Heart right ventricle (tissue), 16 donors: ENCODE measurements at regions of chr6 and their contacts with region 1.

Region 1: GRCh38 chr6:41066867-41067304 is 5.3 kb downstream of the OARD1 start:
- DNase-seq: peak; percentile 43 to 69
- ATAC-seq: no peak
- H3K4me3 ChIP-seq: no peak overlapping the region
- H3K27ac ChIP-seq: peak overlapping the region in 1 of 10 donors; percentile 21
- H3K4me1 ChIP-seq: peaks cover 0 to 53% (median 33%) of the 10 kb centered on the region in 9 donors
- H3K27me3 ChIP-seq: no peaks in the 10 kb centered on the region
- CTCF ChIP-seq: peak; percentile 80 to 90 (median 87)

Region 2: DNA sequence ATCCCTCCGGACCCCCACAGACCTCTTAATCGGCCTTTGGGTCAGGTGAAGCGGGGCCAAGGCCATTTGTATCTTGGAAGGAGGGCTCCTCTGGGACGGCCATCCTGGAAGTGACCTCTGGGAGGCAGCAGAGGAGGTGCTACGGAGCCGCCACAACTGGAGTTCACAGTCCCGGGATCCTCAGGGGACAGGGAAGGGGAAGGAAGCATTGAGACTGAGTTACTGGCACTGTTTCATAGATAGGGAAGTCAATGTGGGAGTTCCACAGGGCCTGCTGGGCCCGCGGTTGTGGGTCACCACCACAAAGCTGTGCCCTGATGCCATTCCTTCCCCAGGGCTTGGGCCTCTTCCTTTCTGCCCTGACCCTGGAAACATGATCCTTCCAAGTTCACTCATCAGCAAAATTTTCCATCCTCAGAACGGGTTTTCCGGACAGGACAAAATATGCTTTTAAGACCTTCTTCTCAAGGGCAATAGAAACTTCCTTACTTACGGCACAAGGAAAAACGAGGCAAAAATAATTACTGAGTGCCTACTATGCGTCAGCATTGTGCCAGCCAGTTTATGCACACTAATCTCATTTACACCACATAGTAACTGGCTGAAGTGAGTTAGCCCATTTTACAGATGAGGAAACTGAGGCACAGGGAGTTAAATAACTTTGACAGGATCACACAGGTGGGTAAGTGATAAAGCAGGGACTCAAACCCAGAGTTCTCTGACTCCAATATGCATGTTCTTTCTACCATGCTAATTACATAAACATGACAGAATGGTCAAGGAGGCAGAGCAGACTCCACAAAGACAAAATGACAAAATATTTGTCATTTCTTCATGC is 171.7 kb before region 1 on chr6:
- intact Hi-C with region 1: loop called in 2 of 10 experiments (anchors 5 kb)
- DNase-seq: peak; percentile 56 to 67
- ATAC-seq: peak; percentile 53 to 88 (median 83)
- H3K4me3 ChIP-seq: no peak overlapping the region
- H3K27ac ChIP-seq: peak overlapping the region in 6 of 10 donors; percentile 8 to 92 (median 44)
- H3K4me1 ChIP-seq: peaks cover 0 to 36% (median 18%) of the 10 kb centered on the region in 9 donors
- H3K27me3 ChIP-seq: no peaks in the 10 kb centered on the region
- CTCF ChIP-seq: peak; percentile 24 to 70 (median 58)

Region 3: GRCh38 chr6:40999569-40999968 is 67.3 kb before region 1 on chr6:
- intact Hi-C with region 1: loop called in 2 of 10 experiments (anchors 10 kb)
- DNase-seq: peak; percentile 43 to 64
- ATAC-seq: peak; percentile 60 to 91 (median 73)
- H3K4me3 ChIP-seq: no peak overlapping the region
- H3K27ac ChIP-seq: peak overlapping the region in 2 of 10 donors; percentile 74 to 82
- H3K4me1 ChIP-seq: peaks cover 0 to 38% (median 14%) of the 10 kb centered on the region in 9 donors
- H3K27me3 ChIP-seq: peaks cover 0 to 13% (median 0%) of the 10 kb centered on the region in 7 donors
- CTCF ChIP-seq: peak in 7 of 9 donors; percentile 38 to 59 (median 53)

Region 4: DNA sequence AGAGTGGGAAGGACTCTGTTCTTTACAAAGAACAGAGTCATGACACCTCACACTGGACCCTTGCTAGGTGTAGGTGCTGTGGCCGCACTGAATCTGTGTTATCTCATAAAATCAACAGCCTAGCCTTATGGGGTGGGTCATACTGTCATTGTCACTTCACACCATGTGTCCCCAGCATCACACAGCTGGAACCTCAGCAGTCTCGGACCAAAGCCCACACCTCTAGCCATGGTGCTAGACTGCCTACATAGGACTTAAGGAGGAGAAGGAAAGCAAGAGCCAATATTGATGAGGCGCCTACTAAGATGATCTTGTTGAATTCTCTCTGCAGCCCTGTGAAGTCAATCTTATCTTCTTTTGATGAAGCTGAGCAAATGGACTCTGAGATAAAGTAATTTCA is 58.9 kb before region 1 on chr6:
- intact Hi-C with region 1: loop called in 7 of 10 experiments (anchors 5 to 10 kb)
- DNase-seq: no peak
- ATAC-seq: no peak
- H3K4me3 ChIP-seq: no peak overlapping the region
- H3K27ac ChIP-seq: no peak overlapping the region
- H3K4me1 ChIP-seq: no peaks in the 10 kb centered on the region
- H3K27me3 ChIP-seq: no peaks in the 10 kb centered on the region
- CTCF ChIP-seq: no peak